ENCODE measurements at regions of chr10 and their contacts with region 1.

Region 1: DNA sequence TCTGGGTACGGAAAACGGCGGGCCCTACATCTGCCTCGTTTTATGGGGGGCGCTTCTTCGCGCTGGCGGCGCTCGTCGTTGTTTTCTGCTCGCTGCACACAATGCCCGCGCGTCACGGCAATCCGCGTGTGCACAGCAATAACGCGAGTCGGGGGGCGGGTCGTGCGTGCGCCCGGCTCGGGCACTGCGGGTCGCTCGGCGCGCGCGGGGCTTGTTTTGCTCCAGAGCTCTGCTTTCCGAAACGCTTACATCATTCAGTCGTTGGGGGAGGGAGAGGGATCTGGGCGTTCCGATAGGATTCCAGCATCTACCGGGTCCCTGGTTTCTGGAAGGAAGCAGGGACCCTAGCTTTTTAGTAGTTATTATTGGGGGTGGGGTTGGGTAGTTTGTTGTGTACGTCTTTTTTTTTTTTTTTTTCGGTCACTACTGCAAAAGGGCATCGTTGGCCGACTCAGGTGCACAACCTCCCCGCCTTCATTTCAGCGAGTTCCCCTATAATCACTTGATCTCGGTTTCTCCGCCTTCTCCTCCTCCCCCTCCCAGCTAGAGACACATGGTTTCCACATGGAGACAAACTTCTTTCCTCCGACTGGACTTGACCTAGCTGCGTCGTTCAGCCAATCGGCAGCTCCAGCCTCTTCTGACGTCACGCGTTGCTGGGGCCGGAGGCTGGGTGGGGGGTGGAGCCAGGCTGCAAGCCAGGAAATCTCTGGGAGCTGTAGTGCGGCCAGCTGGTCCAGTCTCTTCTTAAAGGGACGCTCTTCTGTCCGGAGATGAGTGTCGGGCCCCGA is 3.5 kb downstream of the MXI1 start:
- DNase-seq: peak; percentile 93
- H3K4me3 ChIP-seq: peak overlapping the region; percentile 80
- H3K27ac ChIP-seq: peak overlapping the region; percentile 60
- H3K4me1 ChIP-seq: no peaks in the 10 kb centered on the region; the same call in 1 of the 2 replicates
- H3K27me3 ChIP-seq: no peaks in the 10 kb centered on the region
- CTCF ChIP-seq: no peak

Region 2: GRCh38 chr10:110007701-110008517 is 203.0 kb before region 1 on chr10 and contains the start of gene ADD3:
- CTCF ChIA-PET with region 1: no interaction called
- POLR2A ChIA-PET with region 1: interaction called, 8 read pairs
- intact Hi-C with region 1: loop called (anchors 5 kb)
- DNase-seq: peak; percentile 49 to 79
- H3K4me3 ChIP-seq: peak within 1 kb of the TSS; percentile 91
- H3K27ac ChIP-seq: no peak within 1 kb of the TSS
- H3K4me1 ChIP-seq: peaks cover 36% of the 10 kb centered on the region
- H3K27me3 ChIP-seq: no peaks in the 10 kb centered on the region
- CTCF ChIP-seq: no peak
- total RNA-seq, gene ADD3: 61.7 and 77.7 TPM in 2 replicates

Region 3: DNA sequence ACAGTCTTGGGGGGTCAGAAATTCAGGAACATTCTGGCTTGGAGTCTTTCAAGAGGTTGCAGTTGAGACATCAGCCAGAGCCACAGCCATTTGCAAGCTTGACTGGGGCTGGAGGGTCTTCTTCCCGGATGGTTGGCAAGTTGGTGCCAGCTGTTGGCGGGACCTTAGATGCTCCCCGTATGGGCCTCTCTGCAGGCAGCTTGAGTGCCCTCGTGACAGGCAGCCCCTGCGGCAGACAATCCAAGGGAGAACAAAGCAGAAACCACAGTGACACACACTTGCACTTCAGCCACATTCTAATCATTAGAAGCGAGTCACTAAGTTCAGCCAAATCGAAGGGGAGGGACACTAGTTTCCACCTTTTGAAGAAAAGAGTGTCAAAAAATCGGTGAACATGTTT is 62.9 kb before region 1 on chr10:
- CTCF ChIA-PET with region 1: no interaction called
- POLR2A ChIA-PET with region 1: interaction called, 49 read pairs
- intact Hi-C with region 1: no loop called
- DNase-seq: no peak
- H3K4me3 ChIP-seq: no peak overlapping the region
- H3K27ac ChIP-seq: no peak overlapping the region
- H3K4me1 ChIP-seq: no peaks in the 10 kb centered on the region
- H3K27me3 ChIP-seq: no peaks in the 10 kb centered on the region
- CTCF ChIP-seq: no peak

Region 4: GRCh38 chr10:110168601-110169481 is 42.0 kb before region 1 on chr10:
- CTCF ChIA-PET with region 1: no interaction called
- POLR2A ChIA-PET with region 1: no interaction called
- intact Hi-C with region 1: no loop called
- DNase-seq: no peak
- H3K4me3 ChIP-seq: no peak overlapping the region
- H3K27ac ChIP-seq: no peak overlapping the region
- H3K4me1 ChIP-seq: 0 out of 2 replicates have a peak, but pooled peaks cover 7% of the 10 kb centered on the region
- H3K27me3 ChIP-seq: peaks cover 3% of the 10 kb centered on the region; the same call in 1 of the 2 replicates
- CTCF ChIP-seq: no peak

Region 5: DNA sequence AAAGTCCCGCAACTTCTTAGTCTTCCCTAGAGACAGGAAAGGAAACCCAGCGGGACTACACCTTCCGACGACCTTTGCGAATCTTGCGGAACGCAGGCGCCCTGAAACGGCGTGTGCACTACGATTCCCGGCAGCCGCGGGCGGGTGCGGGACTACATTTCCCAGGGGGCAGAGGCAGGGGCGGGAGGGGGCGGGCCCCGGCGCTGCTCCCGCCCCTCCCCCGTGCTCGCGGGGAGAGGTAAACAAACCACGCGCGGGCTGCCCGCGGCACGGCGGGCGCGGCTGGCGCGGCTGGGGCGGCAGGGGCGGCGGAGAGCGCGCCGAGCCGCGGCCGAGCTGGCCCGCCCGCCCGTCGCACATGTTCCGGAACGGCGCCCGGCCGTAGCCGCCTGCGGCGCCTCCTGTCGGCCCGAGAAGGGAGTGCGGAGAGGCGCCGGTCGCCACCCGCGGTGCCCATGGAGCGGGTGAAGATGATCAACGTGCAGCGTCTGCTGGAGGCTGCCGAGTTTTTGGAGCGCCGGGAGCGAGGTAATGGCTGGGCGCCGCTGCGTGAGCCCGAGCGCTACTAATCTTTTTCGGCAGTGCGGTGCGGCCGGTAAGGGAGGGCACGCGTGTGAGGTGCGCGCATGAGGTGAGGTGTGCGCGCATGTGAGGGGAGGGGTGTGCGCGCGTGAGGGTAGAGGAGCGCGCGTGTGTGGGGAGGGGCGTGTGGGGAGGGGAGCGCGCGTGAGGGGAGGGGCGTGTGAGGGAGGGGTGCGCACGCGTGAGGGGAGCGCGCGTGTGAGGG is 15.1 kb after region 1 on chr10:
- CTCF ChIA-PET with region 1: interaction called, 9 read pairs
- POLR2A ChIA-PET with region 1: interaction called, 9 read pairs
- intact Hi-C with region 1: loop called (anchors 1 kb)
- DNase-seq: peak; percentile 76 to 80
- H3K4me3 ChIP-seq: peak overlapping the region; percentile 66
- H3K27ac ChIP-seq: peak overlapping the region; percentile 59
- H3K4me1 ChIP-seq: peaks cover 15% of the 10 kb centered on the region
- H3K27me3 ChIP-seq: no peaks in the 10 kb centered on the region
- CTCF ChIP-seq: peak; percentile 61

Region 6: DNA sequence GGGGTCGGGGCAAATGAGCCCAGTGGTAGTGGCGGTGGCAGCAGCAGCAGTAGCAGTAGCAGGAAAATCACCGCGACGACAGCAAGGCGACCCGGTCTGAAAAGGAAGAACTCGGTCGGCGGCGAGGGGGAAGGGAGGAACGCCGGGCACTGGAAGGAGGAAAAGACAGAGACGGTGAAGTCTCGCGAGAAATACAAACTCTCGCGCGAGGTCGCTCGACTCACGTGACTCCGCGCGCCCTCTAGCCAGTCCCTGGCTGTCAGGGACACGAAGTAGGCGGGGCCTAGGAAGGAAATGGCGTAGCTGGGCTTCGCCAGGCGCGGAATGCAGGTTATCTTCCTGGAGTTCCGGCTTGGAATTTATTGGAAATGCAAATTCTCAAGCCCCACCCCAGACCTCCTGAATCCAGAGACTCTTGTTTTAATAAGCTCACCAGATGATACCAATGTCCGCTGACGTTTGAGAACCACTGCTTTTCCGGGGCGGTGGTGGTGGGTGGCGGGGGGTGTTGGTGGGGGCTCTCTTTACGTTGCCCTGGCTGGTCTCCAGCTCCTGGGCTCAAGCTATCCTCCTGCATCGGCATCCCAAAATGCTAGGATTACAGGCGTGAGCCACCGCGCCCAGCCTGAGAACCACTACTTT is 94.0 kb after region 1 on chr10 and contains the start of gene SMNDC1:
- CTCF ChIA-PET with region 1: interaction called, 5 read pairs
- POLR2A ChIA-PET with region 1: interaction called, 4 read pairs
- intact Hi-C with region 1: loop called (anchors 5 kb)
- DNase-seq: peak; percentile 94 to 95
- H3K4me3 ChIP-seq: peak within 1 kb of the TSS; percentile 69
- H3K27ac ChIP-seq: peak within 1 kb of the TSS; percentile 89
- H3K4me1 ChIP-seq: peaks cover 38% of the 10 kb centered on the region
- H3K27me3 ChIP-seq: no peaks in the 10 kb centered on the region
- CTCF ChIP-seq: no peak
- total RNA-seq, gene SMNDC1: 23.1 and 26.9 TPM in 2 replicates

Measured in PC-9 (cell line).